GM12878 (cell line): ENCODE measurements at regions of chr15 and their contacts with region 1.

Region 1: DNA sequence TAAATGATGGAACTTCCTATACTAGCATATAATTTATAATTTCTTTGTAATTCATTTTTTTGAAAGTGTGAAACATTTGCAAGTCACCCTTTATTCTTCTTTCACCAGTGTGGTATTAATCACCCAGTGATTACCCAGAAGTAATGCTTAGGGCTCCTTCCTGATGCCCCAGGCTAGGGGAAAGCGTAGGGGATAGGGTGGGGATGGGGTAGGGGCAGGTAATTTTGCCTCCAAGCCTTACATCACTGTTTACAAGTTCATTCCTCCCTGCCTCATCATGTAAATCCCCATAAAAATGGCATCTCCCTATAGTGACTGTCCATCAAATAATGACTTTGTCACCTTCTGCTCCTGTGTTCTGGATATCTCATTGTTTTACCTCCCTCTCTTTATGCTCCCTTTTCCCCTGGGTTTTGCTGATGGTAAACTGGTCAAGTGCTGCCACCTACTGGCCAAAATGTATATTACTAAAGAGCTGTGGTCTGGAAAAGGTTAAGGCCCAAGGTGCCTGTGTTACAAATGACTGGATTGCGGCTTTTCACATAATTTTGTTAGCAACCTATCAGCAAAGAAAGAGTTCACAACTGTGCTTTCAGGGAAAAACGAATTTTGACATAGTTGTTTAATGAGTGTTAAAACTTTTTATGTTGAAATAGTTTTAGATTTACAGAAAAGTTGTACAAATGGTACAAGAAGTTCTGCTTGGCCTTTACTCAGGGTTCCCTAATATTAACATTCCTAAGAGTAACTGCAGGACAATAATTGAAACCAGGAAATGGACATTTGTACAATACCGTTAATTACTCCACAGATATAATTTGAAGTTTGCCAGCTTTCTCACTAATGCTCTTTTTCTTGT is 54.7 kb downstream of the ONECUT1 start:
- DNase-seq: peak; percentile 64
- ATAC-seq: peak; percentile 96
- H3K4me3 ChIP-seq: no peak overlapping the region
- H3K27ac ChIP-seq: no peak overlapping the region
- H3K4me1 ChIP-seq: no peaks in the 10 kb centered on the region
- H3K27me3 ChIP-seq: no peaks in the 10 kb centered on the region
- CTCF ChIP-seq: peak; percentile 58 to 88 (median 72)
- EP300 ChIP-seq: no peak
- POLR2A ChIP-seq: no peak
- RAD21 ChIP-seq: peak; percentile 98

Region 2: DNA sequence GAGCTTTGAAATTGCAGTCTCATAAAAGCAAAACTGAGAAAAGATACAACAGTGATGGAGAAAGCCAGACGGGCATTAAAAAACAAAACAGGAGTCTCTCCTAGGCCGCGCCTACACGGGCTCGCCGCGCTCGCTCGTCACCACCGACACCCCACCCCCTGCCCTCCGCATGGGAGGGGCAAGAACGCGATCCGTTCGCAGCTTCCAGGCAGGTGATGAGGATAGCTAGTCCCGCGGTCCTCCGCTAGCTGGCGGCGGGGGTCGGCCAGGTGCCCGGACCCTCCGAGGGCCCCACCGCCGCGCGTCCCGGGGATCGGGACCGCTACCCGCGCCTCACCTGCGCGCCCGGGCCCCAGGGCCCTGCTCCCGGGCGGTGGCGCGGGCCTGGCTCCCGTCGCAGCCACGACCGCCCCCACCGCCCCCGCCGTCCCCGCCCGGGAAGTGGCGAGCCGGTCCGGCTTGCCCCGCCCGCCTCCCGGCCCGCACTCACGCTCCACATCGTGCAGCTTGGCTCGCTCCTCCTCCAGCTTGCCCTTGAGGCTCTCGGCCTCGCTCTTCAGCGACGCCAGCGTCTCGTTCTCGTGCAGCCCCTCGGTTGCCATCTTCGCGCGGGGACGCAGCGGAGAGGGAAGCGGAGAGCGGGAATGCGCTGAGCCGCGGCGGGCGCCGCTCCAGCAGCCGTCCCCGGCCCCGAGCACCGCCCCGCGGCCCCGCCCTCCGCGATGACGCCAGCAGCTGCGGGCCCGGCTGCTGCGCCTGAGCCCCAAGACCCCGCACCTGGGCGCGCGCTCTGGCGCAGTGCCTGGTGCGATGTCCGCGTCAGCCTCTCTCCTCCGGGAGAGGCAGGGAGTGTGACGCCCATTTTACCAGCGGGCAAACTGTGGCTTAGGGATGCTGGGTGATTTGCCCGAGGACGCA is 555.9 kb before region 1 on chr15:
- CTCF ChIA-PET with region 1: interaction called, 11 read pairs
- POLR2A ChIA-PET with region 1: no interaction called
- RAD21 ChIA-PET with region 1: no interaction called
- SMC1A ChIA-PET with region 1: interaction called, 4 read pairs
- in situ Hi-C with region 1: no loop called
- intact Hi-C with region 1: loop called (anchors 10 kb)
- DNase-seq: peak; percentile 37
- ATAC-seq: peak; percentile 87
- H3K4me3 ChIP-seq: peak overlapping the region; percentile 92
- H3K27ac ChIP-seq: peak overlapping the region; percentile 76
- H3K4me1 ChIP-seq: peaks cover 12% of the 10 kb centered on the region
- H3K27me3 ChIP-seq: no peaks in the 10 kb centered on the region
- CTCF ChIP-seq: no peak
- EP300 ChIP-seq: no peak
- POLR2A ChIP-seq: peak; percentile 89
- RAD21 ChIP-seq: no peak

Region 3: DNA sequence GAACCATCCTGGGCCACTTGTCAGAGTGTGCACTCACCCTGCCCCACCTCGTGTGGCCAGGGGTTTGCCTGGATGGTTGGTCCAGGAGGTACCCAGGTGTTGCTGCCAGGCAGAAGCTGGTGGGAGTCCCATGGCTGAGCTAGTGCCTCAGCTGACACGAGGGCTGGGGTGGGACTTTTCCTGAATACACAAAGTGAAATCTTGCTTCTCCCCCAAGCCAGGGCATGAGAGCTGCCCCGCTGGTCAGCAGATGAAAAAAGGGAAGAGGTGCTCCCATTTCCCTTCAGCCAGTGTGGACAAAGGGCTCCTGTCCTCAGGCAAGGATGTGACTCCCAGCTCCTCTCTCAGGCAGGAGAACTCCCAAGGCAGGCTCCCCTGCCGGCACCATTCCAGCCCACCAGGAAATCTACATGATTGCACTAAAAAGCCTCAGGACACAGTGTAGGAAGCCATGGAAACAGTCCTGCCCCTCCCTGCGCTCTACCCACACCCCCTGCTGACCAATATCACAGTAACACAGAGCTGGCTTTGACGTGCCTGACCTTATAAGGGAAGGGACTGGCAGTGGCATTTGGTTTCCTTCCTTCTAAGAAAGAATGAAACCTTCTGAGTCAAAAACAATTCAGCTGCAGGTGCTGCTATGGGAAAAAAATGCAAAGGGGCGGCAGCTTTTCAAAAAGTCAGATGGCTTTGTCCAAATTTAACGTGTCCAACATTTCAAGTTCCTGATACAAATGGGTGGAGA is 473.8 kb before region 1 on chr15:
- CTCF ChIA-PET with region 1: interaction called, 191 read pairs
- POLR2A ChIA-PET with region 1: no interaction called
- RAD21 ChIA-PET with region 1: interaction called, 121 read pairs
- SMC1A ChIA-PET with region 1: interaction called, 143 read pairs
- in situ Hi-C with region 1: no loop called
- intact Hi-C with region 1: loop called (anchors 1 kb)
- DNase-seq: peak; percentile 86
- ATAC-seq: peak; percentile 100
- H3K4me3 ChIP-seq: no peak overlapping the region
- H3K27ac ChIP-seq: peak overlapping the region; percentile 95
- H3K4me1 ChIP-seq: peaks cover 24% of the 10 kb centered on the region
- H3K27me3 ChIP-seq: no peaks in the 10 kb centered on the region
- CTCF ChIP-seq: peak in 2 of 3 experiments; percentile 24 to 25; a peak in 1 of 6 replicates
- EP300 ChIP-seq: 0 out of 4 replicates have a peak, but pooled peaks have one; percentile 31 to 59
- POLR2A ChIP-seq: no peak; the same call in 1 of the 2 replicates
- RAD21 ChIP-seq: no peak

Region 4: DNA sequence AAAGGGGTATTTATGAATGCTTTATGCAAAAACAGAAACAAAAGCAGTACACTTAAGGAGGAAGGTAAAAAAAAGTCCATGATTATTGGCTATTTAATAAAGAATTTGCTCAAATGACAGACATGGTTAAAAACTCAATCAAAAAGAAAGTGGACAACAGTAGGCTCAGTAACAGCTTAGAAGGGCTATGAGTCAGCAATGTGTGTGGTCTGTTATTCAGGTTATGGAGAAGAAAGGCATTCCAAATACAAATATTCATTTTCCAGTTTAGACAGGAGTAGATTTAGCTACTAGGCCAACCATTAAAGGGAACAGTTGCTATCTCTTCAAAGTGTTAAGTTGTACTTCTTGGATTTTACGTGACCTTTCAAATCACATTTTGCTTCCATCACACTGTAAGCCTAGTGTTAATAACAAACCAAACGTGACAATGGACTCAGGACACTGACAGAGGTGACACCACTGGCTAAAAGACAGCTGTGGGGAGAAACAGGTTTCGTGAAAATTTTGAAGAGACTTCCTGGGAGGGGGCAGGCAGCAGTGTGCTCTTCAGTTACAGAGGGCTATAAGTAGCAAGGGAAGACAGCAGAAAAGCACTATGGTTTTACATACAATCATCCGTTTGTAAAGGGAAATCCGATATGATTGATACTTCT is 398.1 kb before region 1 on chr15:
- CTCF ChIA-PET with region 1: interaction called, 47 read pairs
- POLR2A ChIA-PET with region 1: no interaction called
- RAD21 ChIA-PET with region 1: interaction called, 49 read pairs
- SMC1A ChIA-PET with region 1: interaction called, 50 read pairs
- in situ Hi-C with region 1: no loop called
- intact Hi-C with region 1: no loop called
- DNase-seq: no peak
- ATAC-seq: no peak
- H3K4me3 ChIP-seq: no peak overlapping the region
- H3K27ac ChIP-seq: no peak overlapping the region
- H3K4me1 ChIP-seq: no peaks in the 10 kb centered on the region
- H3K27me3 ChIP-seq: no peaks in the 10 kb centered on the region
- CTCF ChIP-seq: no peak
- EP300 ChIP-seq: no peak
- POLR2A ChIP-seq: no peak
- RAD21 ChIP-seq: no peak

Region 5: GRCh38 chr15:52563604-52564003 is 171.9 kb before region 1 on chr15:
- CTCF ChIA-PET with region 1: interaction called, 12 read pairs
- POLR2A ChIA-PET with region 1: no interaction called
- RAD21 ChIA-PET with region 1: interaction called, 11 read pairs
- SMC1A ChIA-PET with region 1: interaction called, 4 read pairs
- in situ Hi-C with region 1: no loop called
- intact Hi-C with region 1: loop called (anchors 5 kb)
- DNase-seq: no peak
- ATAC-seq: no peak
- H3K4me3 ChIP-seq: peak overlapping the region; percentile 33
- H3K27ac ChIP-seq: no peak overlapping the region
- H3K4me1 ChIP-seq: peaks cover 21% of the 10 kb centered on the region
- H3K27me3 ChIP-seq: no peaks in the 10 kb centered on the region
- CTCF ChIP-seq: no peak
- EP300 ChIP-seq: no peak
- POLR2A ChIP-seq: no peak
- RAD21 ChIP-seq: no peak

Region 6: GRCh38 chr15:52568601-52569256 is 166.7 kb before region 1 on chr15 and contains the start of gene ARPP19:
- CTCF ChIA-PET with region 1: interaction called, 12 read pairs
- POLR2A ChIA-PET with region 1: no interaction called
- RAD21 ChIA-PET with region 1: interaction called, 11 read pairs
- SMC1A ChIA-PET with region 1: interaction called, 4 read pairs
- in situ Hi-C with region 1: no loop called
- intact Hi-C with region 1: loop called (anchors 5 kb)
- DNase-seq: peak; percentile 69
- ATAC-seq: peak; percentile 81
- H3K4me3 ChIP-seq: peak within 1 kb of the TSS; percentile 72
- H3K27ac ChIP-seq: peak within 1 kb of the TSS; percentile 93
- H3K4me1 ChIP-seq: peaks cover 7% of the 10 kb centered on the region
- H3K27me3 ChIP-seq: no peaks in the 10 kb centered on the region
- CTCF ChIP-seq: peak in 1 of 3 experiments; percentile 39; a peak in 2 of 6 replicates
- EP300 ChIP-seq: no peak
- POLR2A ChIP-seq: peak; percentile 81
- RAD21 ChIP-seq: peak; percentile 34
- polyA plus RNA-seq, gene ARPP19: 77.2 to 114 TPM

Region 7: DNA sequence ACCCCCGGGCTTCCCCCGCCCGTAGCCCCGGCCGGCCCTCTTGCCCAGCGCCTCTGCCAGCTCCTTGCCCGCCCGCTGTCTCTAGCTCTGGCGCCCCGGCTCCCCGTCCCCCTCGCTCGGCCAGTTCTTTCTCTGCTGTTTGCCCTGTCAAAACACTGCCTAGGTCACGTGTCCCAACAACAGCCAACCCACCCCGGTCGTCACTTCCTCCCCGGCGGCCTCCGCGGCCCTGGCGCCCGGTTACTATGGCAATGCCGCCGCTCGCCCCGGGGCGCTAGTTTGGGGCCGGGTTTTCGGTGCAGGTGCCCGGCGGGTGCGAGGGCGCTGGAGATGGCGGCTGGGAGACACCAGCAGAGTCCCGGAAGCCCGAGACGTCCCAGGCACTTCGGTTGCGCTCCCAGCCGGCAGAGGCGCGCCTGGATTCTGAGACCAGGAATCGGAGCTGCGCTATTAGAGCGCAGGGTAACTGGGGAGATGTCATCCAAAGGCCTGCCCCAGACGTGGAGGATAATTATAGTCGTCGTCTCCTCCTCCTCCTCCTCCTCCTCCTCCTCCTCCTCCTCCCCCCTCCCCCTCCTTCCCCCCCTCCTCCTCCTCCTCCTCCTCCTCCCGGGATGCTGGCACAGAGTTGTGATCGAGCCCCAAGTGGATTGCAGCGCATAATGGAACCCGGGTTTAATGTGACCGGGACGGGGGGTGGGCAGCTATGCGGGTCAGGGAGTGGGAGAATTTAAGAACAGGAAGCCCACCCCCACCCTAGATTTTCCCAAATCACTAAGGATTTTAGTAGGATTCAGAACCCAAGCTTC is 56.0 kb before region 1 on chr15 and contains the start of gene ATOSA:
- CTCF ChIA-PET with region 1: interaction called, 7 read pairs
- POLR2A ChIA-PET with region 1: no interaction called
- RAD21 ChIA-PET with region 1: interaction called, 10 read pairs
- SMC1A ChIA-PET with region 1: interaction called, 8 read pairs
- in situ Hi-C with region 1: no loop called
- intact Hi-C with region 1: loop called (anchors 5 kb)
- DNase-seq: peak; percentile 48
- ATAC-seq: peak; percentile 84
- H3K4me3 ChIP-seq: peak within 1 kb of the TSS; percentile 93
- H3K27ac ChIP-seq: peak within 1 kb of the TSS; percentile 84
- H3K4me1 ChIP-seq: peaks cover 43% of the 10 kb centered on the region
- H3K27me3 ChIP-seq: no peaks in the 10 kb centered on the region
- CTCF ChIP-seq: no peak
- EP300 ChIP-seq: no peak
- POLR2A ChIP-seq: peak; percentile 74
- RAD21 ChIP-seq: no peak
- polyA plus RNA-seq, gene ATOSA: 6.8 to 7.9 TPM